ENCODE measurements at regions of chr10 and their contacts with region 1.

Region 1: DNA sequence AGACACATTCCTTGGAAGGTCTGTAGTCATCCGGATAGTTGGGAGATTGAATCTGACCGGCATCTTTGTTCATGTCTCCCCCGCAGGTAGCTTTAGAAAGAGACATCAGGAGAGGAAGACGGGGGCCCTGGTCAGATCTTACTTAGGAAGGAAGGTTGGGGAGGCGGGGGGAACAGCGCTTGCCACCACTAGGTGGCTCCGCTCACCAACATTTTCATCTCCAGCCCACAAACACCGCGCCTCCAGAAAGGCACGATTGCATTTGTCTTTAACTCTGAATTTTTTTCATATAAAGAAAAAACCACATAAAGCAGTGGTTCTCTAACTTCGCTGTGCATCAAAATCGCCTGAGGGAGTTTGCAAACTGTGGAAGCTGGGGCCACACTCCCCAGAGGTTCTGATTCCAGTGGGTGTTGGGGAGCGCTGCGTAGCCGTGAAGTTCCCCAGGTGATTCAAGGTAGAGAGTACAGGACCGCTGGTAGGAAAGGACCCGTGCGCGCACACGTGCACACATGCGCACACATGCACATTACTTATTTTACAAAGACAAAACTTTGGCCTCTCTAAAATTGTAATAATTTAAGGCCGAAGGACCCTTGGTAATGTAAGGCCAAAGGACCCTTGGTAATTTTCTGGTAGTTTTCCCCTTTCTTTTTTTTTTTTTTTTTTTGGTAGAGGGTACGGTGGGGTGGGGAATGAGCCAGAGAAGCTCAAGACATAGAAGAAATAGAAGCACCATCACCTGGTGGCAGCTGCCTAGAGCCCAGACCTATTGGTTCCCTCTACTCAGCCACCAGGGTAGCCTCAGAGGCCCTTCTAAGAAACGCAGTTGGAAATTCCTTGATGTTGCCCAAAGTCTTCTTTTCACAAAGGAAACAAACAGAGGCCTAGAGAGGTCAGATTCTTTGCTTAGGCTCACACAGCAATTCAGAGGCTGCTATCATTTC is 37.4 kb upstream of the OPALIN start:
- DNase-seq: peak; percentile 81
- H3K4me3 ChIP-seq: no peak overlapping the region
- H3K27ac ChIP-seq: no peak overlapping the region
- H3K4me1 ChIP-seq: no peaks in the 10 kb centered on the region
- H3K27me3 ChIP-seq: no peaks in the 10 kb centered on the region
- CTCF ChIP-seq: peak; percentile 73 to 84 (median 83)
- POLR2A ChIP-seq: no peak

Region 2: DNA sequence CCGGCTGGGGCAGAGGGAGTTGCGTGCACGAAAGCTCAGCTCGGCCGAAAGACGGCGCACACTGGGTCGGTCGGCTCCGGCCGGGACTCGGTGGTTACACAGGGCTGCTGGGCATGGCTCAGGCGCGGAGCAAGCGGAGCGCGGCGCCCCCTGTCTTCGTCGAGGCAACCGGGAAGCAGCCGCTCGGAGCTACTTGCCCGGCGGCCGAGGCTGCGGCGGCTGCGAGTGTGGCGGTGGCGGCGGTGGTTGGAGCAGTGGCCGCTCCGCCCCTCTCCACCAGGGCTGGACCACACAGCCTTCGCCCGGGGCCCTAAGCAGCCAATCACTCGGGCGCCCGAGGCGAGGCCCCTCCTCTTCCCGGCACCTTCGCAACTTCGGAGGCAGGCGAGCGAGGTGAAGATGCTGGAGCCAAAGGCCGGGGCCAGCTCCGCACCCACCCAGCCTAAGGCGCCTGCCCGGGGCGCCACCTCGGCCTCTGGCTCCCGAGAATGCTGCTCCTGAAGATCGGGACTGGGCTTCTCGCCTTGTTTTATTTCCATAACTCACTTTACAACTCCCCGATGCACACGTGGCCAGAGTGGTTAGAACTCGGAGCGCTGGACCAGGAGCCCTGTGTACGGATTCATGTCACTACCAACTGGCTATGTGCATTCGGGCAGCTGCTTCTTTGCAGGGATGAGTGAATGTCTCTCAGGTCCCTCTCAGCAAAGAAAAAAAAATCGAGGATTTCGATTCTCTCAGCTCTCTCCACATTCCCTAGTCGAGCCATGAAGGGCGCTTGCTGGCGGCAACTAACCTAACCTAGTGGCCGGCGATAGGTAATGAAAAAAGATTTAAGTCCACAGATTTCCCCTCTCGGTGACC is 117.7 kb after region 1 on chr10 and contains the start of gene TLL2:
- intact Hi-C with region 1: loop called (anchors 10 kb)
- DNase-seq: peak; percentile 88
- H3K4me3 ChIP-seq: peak within 1 kb of the TSS; percentile 40 to 50
- H3K27ac ChIP-seq: no peak within 1 kb of the TSS
- H3K4me1 ChIP-seq: peaks cover 15% of the 10 kb centered on the region
- H3K27me3 ChIP-seq: no peaks in the 10 kb centered on the region
- CTCF ChIP-seq: peak; percentile 60 to 75 (median 65)
- POLR2A ChIP-seq: no peak
- total RNA-seq, gene TLL2: 0.39 to 0.68 TPM

Region 3: DNA sequence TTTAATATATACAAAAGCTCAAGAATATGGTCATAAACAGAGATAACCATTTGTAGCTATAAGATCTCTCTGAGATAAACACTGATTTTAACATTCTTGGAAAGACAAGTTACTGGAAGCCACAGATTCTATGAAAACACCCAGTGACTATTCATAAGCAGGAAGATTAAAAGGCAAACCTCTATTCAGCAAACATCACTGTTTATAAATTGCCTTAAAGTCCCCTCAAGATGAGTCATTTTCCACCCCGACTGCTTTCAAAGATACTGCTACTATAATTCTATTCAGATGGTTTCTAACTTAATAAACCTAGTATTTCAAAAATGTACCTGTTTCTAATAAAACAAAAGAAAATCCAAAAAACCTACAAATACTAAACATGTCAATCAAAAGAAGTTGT is 169.6 kb after region 1 on chr10:
- intact Hi-C with region 1: no loop called
- DNase-seq: no peak
- H3K4me3 ChIP-seq: no peak overlapping the region
- H3K27ac ChIP-seq: no peak overlapping the region
- H3K4me1 ChIP-seq: no peaks in the 10 kb centered on the region
- H3K27me3 ChIP-seq: no peaks in the 10 kb centered on the region
- CTCF ChIP-seq: no peak
- POLR2A ChIP-seq: no peak

Measured in testis (tissue), 5 donors.